ENCODE measurements at regions of chr10 and their contacts with region 1.

Region 1: DNA sequence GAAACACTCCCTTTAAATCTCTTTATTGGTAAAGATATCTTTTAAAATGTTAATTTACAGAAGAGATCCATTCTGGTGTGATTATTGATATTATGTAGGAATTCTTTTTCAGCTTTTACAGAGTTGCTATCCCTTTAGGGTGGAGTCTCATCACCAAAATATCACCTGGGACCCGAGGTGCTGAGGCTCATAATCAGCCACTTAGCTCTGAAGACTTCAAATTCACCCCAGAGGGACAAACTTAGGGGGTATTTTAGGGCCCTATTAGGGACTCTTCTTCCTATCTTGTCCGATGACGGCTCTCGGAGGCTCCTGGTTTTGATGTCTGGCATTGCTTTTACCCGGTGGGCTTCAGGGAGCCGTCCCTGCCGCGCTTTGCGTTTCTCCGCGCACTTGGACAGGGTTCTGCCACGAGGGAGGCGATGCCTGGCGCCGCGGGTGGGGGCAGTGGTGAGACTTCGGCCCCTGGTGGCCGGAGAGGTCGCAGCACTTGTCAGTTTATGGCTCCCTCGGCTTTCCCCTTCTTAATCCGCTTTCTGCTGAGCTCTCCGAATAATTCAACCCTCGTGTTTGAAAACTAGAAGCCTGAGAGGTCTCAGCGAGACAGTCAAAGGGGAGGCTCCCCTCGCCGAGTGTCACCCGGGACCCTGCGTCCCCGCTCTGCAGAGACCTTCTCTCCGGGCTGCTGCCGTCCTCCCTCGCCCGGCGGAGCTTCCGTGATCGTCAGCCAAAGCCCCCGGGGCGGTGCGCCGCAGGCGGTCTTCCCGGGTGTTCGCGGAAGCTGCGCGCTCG is 27.8 kb downstream of the RBM20 start:
- DNase-seq: no peak
- H3K4me3 ChIP-seq: peak overlapping the region; percentile 67
- H3K27ac ChIP-seq: no peak overlapping the region
- H3K27me3 ChIP-seq: peaks cover 12% of the 10 kb centered on the region
- CTCF ChIP-seq: peak; percentile 98

Region 2: GRCh38 chr10:110535958-110536891 is 135.8 kb before region 1 on chr10:
- CTCF ChIA-PET with region 1: no interaction called
- POLR2A ChIA-PET with region 1: no interaction called
- DNase-seq: peak; percentile 61
- H3K4me3 ChIP-seq: no peak overlapping the region
- H3K27ac ChIP-seq: no peak overlapping the region
- H3K27me3 ChIP-seq: no peaks in the 10 kb centered on the region
- CTCF ChIP-seq: peak; percentile 30

Region 3: DNA sequence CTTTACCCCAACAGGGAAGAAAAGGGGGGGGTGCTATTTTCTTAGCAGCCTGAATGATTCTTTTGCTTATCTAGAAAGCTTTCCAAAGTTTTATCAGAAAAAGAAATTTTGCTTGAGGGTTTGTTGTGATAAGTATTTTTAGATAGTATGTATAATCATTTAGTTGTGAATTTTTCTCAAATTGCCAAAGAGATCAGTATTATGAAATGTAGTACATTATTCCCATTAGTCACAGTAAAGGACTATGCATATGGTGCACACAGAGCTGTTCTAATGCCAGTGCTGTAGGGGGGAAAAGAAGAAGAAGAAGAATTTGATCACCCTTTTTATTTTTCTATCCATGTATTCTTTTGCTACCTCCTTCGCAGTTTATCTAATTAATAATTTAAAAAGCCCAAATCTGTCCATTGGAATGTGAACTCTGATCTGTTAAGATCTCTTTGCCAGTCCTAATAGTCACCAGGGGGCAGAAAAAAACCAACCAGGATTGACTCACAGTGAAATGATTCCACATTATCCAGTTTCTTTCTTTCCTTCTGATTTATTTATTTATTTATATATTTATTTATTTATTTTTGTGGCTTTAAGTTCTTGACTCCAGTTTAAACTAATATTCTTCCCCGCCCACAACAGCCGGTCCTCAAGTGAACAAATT is 23.2 kb before region 1 on chr10:
- CTCF ChIA-PET with region 1: interaction called, 12 read pairs
- POLR2A ChIA-PET with region 1: no interaction called
- DNase-seq: no peak
- H3K4me3 ChIP-seq: no peak overlapping the region
- H3K27ac ChIP-seq: no peak overlapping the region
- H3K27me3 ChIP-seq: peaks cover 23% of the 10 kb centered on the region
- CTCF ChIP-seq: 0 out of 2 replicates have a peak, but pooled peaks have one; percentile 8

Region 4: DNA sequence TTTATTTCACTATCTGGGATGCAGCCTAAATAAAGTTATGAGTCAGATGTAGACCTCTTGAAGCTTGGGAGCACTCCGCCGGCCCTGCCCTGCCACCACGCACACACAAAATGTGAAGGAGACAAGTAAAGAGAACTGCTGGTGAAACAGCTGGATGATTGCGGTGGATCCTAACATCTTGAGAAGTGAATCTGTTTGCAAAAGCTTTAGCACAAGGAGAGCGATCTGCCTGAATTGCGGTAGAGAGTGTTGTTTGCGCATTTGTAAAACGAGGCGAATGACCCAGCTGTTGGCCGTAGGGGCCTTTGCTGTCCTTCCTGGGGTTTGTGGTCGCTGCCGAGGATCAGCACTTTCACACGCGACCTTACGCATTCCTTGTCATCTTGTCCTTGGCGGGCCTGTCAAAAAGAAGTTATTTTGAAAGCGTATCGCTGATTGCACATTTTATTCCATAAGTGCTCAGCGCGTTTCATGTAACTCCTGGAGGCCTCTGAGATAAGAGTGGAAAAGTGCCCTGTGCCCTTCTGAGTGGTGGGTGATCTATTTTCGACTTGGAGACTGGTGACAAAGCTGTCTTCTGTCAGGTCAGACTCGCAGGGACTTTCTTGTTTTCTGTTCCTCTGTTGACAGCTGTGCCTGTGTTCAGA is 12.9 kb after region 1 on chr10:
- CTCF ChIA-PET with region 1: interaction called, 89 read pairs
- POLR2A ChIA-PET with region 1: interaction called, 10 read pairs
- DNase-seq: peak; percentile 26
- H3K4me3 ChIP-seq: peak overlapping the region; percentile 25
- H3K27ac ChIP-seq: peak overlapping the region; percentile 52
- H3K27me3 ChIP-seq: no peaks in the 10 kb centered on the region
- CTCF ChIP-seq: no peak

Region 5: GRCh38 chr10:110706690-110707098 is 34.7 kb after region 1 on chr10:
- CTCF ChIA-PET with region 1: interaction called, 13 read pairs
- POLR2A ChIA-PET with region 1: no interaction called
- DNase-seq: peak; percentile 79
- H3K4me3 ChIP-seq: no peak overlapping the region
- H3K27ac ChIP-seq: peak overlapping the region; percentile 71
- H3K27me3 ChIP-seq: no peaks in the 10 kb centered on the region
- CTCF ChIP-seq: no peak